Common myeloid progenitor, CD34-positive (primary cell): ENCODE measurements at regions of chr10 and their contacts with region 1.

Region 1: DNA sequence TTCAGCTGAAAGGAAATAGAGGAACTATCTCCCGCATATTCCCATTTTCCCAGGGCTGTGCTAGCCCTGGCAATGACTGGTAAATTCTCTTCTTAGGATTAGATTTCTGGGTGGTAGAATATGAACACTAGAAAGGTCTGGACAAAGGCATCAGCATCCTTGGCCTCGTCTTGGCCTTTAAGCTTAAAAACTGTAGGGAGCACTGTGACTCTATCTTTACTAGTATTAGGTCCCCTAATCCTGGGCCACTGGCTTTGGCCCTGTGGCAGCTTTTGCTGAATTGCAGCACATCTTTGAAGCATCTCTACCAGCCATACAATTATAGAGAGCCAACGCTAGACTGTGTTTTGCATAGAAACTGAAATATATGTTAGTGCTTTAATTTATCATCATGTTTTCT is 41.5 kb upstream of the EBLN1 start:
- DNase-seq: peak in 2 of 3 donors; percentile 78 to 79
- H3K4me3 ChIP-seq: no peak overlapping the region
- H3K27ac ChIP-seq: no peak overlapping the region
- H3K4me1 ChIP-seq: peaks cover 0 to 43% (median 14%) of the 10 kb centered on the region in 4 experiments
- H3K27me3 ChIP-seq: no peaks in the 10 kb centered on the region

Region 2: GRCh38 chr10:22271786-22272185 is 12.5 kb after region 1 on chr10:
- CTCF ChIA-PET with region 1: interaction called, 17 read pairs
- POLR2A ChIA-PET with region 1: no interaction called
- DNase-seq: no peak
- H3K4me3 ChIP-seq: no peak overlapping the region
- H3K27ac ChIP-seq: no peak overlapping the region
- H3K4me1 ChIP-seq: no peaks in the 10 kb centered on the region
- H3K27me3 ChIP-seq: no peaks in the 10 kb centered on the region